ENCODE measurements at regions of chrX and their contacts with region 1.

Region 1: GRCh38 chrX:47650164-47651042 is at the start of gene ELK1:
- DNase-seq: peak; percentile 76
- ATAC-seq: peak; percentile 92
- H3K4me3 Mint-ChIP-seq: peak within 1 kb of the TSS; percentile 88
- H3K27ac Mint-ChIP-seq: peak within 1 kb of the TSS; percentile 87
- H3K4me1 Mint-ChIP-seq: peaks cover 29% of the 10 kb centered on the region
- H3K27me3 Mint-ChIP-seq: no peaks in the 10 kb centered on the region
- CTCF ChIP-seq: no peak
- total RNA-seq, gene ELK1: 26.5 and 31.8 TPM in 2 replicates

Region 2: GRCh38 chrX:47144626-47145394 is 505.6 kb before region 1 on chrX and contains the starts of genes NDUFB11 and RBM10:
- CTCF ChIA-PET with region 1: no interaction called
- POLR2A ChIA-PET with region 1: interaction called, 4 read pairs
- intact Hi-C with region 1: loop called (anchors 2 kb)
- DNase-seq: peak; percentile 73
- ATAC-seq: peak; percentile 90
- H3K4me3 Mint-ChIP-seq: peak within 1 kb of the TSS; percentile 96
- H3K27ac Mint-ChIP-seq: peak within 1 kb of the TSS; percentile 97
- H3K4me1 Mint-ChIP-seq: peaks cover 30% of the 10 kb centered on the region
- H3K27me3 Mint-ChIP-seq: no peaks in the 10 kb centered on the region
- CTCF ChIP-seq: no peak
- total RNA-seq, gene NDUFB11: 73.3 and 88.0 TPM in 2 replicates
- total RNA-seq, gene RBM10: 54.9 and 55.6 TPM in 2 replicates

Region 3: GRCh38 chrX:47233337-47234113 is 416.9 kb before region 1 on chrX:
- CTCF ChIA-PET with region 1: no interaction called
- POLR2A ChIA-PET with region 1: no interaction called
- intact Hi-C with region 1: loop called (anchors 5 kb)
- DNase-seq: peak; percentile 74
- ATAC-seq: peak; percentile 90
- H3K4me3 Mint-ChIP-seq: peak overlapping the region; percentile 92
- H3K27ac Mint-ChIP-seq: peak overlapping the region; percentile 98
- H3K4me1 Mint-ChIP-seq: peaks cover 15% of the 10 kb centered on the region
- H3K27me3 Mint-ChIP-seq: no peaks in the 10 kb centered on the region
- CTCF ChIP-seq: no peak

Region 4: GRCh38 chrX:47523297-47523696 is 127.1 kb before region 1 on chrX:
- CTCF ChIA-PET with region 1: no interaction called
- POLR2A ChIA-PET with region 1: no interaction called
- intact Hi-C with region 1: no loop called
- DNase-seq: peak; percentile 78
- ATAC-seq: peak; percentile 99
- H3K4me3 Mint-ChIP-seq: peak overlapping the region; percentile 73
- H3K27ac Mint-ChIP-seq: peak overlapping the region; percentile 46
- H3K4me1 Mint-ChIP-seq: peaks cover 3% of the 10 kb centered on the region
- H3K27me3 Mint-ChIP-seq: no peaks in the 10 kb centered on the region
- CTCF ChIP-seq: no peak

Region 5: DNA sequence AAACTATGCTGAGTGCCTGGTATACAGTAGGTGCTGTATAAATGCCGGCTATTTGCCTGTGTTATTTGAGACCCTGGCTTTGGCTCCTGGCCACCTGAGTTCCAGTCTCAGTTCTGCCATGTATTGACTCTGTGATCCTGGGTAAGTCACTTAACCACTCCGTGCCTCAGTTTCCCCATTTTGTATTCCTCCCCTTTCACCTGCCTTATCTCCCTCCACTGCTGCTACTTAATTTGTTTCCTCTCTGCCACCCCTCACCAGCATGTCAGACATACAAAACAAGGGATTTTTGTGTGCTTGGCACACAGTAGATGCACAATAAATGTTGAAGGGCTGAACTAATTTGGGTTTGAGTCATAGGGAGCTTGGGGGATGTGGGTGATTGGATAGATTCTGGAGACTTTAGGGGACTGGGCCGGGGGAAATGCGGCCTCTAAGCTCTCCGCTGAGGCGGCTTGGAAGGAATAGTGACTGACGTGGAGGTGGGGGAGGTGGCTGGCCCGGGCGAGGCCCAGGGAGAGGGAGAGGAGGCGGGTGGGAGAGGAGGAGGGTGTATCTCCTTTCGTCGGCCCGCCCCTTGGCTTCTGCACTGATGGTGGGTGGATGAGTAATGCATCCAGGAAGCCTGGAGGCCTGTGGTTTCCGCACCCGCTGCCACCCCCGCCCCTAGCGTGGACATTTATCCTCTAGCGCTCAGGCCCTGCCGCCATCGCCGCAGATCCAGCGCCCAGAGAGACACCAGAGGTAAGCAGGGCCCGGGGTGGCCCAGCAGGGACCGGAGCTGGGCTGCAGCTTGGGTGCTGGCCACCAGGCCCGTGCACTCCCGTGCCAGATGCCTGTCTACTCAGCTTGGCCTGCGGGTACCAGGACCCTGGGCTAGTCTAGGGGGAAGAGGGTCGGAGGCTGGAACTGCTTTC is 68.4 kb before region 1 on chrX and contains the start of gene TIMP1:
- CTCF ChIA-PET with region 1: no interaction called
- POLR2A ChIA-PET with region 1: no interaction called
- intact Hi-C with region 1: loop called (anchors 1 kb)
- DNase-seq: peak; percentile 35
- ATAC-seq: peak; percentile 94
- H3K4me3 Mint-ChIP-seq: peak within 1 kb of the TSS; percentile 49
- H3K27ac Mint-ChIP-seq: peak within 1 kb of the TSS; percentile 3
- H3K4me1 Mint-ChIP-seq: peaks cover 13% of the 10 kb centered on the region
- H3K27me3 Mint-ChIP-seq: no peaks in the 10 kb centered on the region
- CTCF ChIP-seq: no peak
- total RNA-seq, gene TIMP1: 6.7 and 8.2 TPM in 2 replicates

Region 6: DNA sequence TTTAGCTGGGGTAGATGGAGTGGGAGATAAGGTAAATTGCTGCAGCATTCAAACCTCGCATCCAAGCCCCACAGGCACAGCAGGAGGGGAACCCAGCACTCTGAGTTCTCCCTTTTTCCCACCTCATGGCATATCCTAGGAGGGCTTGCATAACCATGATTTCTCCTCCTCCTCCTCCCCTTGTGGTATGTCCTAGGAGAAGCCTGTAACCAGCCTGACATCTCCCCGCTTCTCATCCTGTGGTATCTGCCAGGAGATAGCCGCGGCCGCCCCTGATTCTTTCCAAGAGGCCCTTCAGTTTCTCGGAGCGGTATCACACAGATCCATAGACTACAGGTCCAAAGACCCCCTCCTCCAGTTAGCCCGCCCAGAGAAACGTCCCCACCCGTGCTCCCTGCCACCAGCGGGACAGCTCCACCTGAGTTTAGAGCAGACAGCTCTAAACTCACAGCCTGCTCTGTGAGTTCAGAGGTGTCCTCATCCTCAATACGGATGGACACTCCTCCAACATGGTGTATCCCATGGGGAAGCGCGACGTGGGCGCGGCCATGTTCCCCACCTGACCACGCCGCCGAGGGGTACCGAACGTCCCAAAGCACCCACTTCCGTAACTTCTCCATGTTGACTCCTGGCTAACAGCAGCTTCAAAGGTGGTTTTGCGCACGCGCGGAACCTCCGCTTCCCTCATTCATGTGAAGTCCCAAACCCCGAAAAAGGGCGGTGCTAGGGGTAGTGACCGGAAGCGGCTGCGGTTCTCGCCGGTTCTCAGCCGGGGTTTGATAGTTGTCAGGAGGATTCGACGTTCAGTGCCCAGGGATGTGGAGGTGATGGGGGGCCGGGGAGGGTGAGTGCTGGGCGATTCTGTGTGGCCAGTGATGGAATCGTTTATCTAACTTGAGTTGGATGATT is 186.0 kb after region 1 on chrX and contains the start of gene ZNF81:
- CTCF ChIA-PET with region 1: no interaction called
- POLR2A ChIA-PET with region 1: no interaction called
- intact Hi-C with region 1: loop called (anchors 2 kb)
- DNase-seq: peak; percentile 76
- ATAC-seq: peak; percentile 95
- H3K4me3 Mint-ChIP-seq: peak within 1 kb of the TSS; percentile 93
- H3K27ac Mint-ChIP-seq: peak within 1 kb of the TSS; percentile 93
- H3K4me1 Mint-ChIP-seq: peaks cover 21% of the 10 kb centered on the region
- H3K27me3 Mint-ChIP-seq: no peaks in the 10 kb centered on the region
- CTCF ChIP-seq: no peak
- total RNA-seq, gene ZNF81: 11.0 and 15.3 TPM in 2 replicates

Measured in activated B cell treated with CpG ODN at 0.5 μM for 24 hours (primary cell).